Activated CD4-positive, alpha-beta memory T cell treated with anti-CD3 and anti-CD28 coated beads for 36 hours (primary cell): ENCODE measurements at regions of chr7 and their contacts with region 1.

Region 1: GRCh38 chr7:121138262-121138933 is 149.9 kb downstream of the CPED1 start:
- DNase-seq: peak; percentile 14
- H3K4me3 Mint-ChIP-seq: peak overlapping the region; percentile 14
- H3K27ac Mint-ChIP-seq: no peak overlapping the region
- H3K4me1 Mint-ChIP-seq: peaks cover 15% of the 10 kb centered on the region
- H3K27me3 Mint-ChIP-seq: peaks cover 2% of the 10 kb centered on the region

Region 2: DNA sequence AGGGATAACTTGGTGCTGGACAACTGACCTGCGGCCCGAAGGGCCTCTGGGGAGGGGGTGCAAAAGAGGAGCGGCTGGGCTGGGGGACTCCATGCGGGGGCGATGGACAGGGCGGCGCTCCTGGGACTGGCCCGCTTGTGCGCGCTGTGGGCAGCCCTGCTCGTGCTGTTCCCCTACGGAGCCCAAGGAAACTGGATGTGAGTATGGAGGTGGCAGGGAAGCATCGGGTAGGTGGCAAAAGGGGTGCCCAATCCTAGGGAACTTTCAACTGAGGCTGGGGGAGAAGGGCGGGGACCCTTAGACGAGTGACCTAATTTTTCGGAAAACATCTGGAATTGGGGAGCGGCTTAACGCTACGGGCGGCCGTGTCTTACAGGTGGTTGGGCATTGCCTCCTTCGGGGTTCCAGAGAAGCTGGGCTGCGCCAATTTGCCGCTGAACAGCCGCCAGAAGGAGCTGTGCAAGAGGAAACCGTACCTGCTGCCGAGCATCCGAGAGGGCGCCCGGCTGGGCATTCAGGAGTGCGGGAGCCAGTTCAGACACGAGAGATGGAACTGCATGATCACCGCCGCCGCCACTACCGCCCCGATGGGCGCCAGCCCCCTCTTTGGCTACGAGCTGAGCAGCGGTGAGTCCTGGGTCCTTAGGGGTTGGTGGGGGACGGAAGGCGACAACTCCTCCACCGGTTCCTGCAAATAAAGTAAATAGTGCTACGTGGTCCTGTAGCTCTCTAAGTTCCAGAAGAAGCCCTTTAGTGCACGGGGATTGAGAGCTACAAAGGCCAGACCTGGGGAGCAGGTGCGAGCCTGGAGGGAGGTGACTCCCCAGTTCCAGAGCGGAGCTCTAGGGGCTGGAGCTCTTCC is 191.0 kb after region 1 on chr7:
- CTCF ChIA-PET with region 1: no interaction called
- POLR2A ChIA-PET with region 1: no interaction called
- intact Hi-C with region 1: loop called (anchors 10 kb)
- DNase-seq: peak; percentile 38
- H3K4me3 Mint-ChIP-seq: peak overlapping the region; percentile 4
- H3K27ac Mint-ChIP-seq: no peak overlapping the region
- H3K4me1 Mint-ChIP-seq: peaks cover 21% of the 10 kb centered on the region
- H3K27me3 Mint-ChIP-seq: peaks cover 46% of the 10 kb centered on the region

Region 3: GRCh38 chr7:121504478-121504877 is 366.1 kb after region 1 on chr7:
- CTCF ChIA-PET with region 1: no interaction called
- POLR2A ChIA-PET with region 1: no interaction called
- intact Hi-C with region 1: no loop called
- DNase-seq: no peak
- H3K4me3 Mint-ChIP-seq: no peak overlapping the region
- H3K27ac Mint-ChIP-seq: no peak overlapping the region
- H3K4me1 Mint-ChIP-seq: peaks cover 12% of the 10 kb centered on the region
- H3K27me3 Mint-ChIP-seq: peaks cover 9% of the 10 kb centered on the region